Heart left ventricle (tissue), 16 donors: ENCODE measurements at regions of chr1 and their contacts with region 1.

Region 1: DNA sequence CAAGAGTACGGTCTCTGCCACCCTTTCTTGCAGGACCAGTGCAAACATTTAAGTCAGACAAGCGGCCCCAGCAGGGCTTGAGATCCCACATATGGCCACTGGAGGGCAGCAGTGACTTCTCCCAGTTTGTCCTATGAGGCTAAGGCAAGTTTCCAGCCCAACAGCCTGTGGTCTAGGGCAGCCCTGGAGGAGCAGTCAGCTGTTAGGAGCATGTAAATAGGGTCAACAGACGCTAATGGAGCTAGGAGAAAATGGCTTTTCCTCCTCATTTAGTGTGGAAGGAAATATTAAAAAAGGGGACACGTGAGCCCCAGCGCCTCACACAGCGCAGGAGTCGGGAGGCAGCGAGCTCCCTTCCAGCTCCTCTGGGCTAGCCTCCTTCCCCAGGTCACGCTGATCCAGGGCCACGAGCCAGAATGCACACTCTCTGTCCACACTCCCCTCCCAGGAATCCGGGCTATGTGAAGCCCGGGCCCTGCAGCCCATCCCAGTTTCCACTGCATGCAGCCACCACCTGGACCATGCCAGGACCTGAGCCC is 95.6 kb downstream of the LAMC2 start:
- DNase-seq: peak; percentile 90 to 95 (median 90)
- ATAC-seq: peak; percentile 87 to 94 (median 91)
- H3K4me3 ChIP-seq: peak overlapping the region in 3 of 12 donors; percentile 24 to 27 (median 25)
- H3K27ac ChIP-seq: peak overlapping the region; percentile 64 to 94 (median 82)
- H3K4me1 ChIP-seq: peaks cover 0 to 62% (median 44%) of the 10 kb centered on the region in 12 donors
- H3K27me3 ChIP-seq: no peaks in the 10 kb centered on the region
- CTCF ChIP-seq: peak; percentile 91 to 98 (median 96)
- POLR2A ChIP-seq: no peak

Region 2: GRCh38 chr1:183244466-183244865 is 37.2 kb before region 1 on chr1:
- intact Hi-C with region 1: loop called in 1 of 10 experiments (anchors 5 kb)
- DNase-seq: peak; percentile 49 to 89 (median 84)
- ATAC-seq: peak; percentile 22 to 64 (median 46)
- H3K4me3 ChIP-seq: no peak overlapping the region
- H3K27ac ChIP-seq: peak overlapping the region; percentile 26 to 88 (median 70)
- H3K4me1 ChIP-seq: peaks cover 0 to 60% (median 13%) of the 10 kb centered on the region in 12 donors
- H3K27me3 ChIP-seq: no peaks in the 10 kb centered on the region
- CTCF ChIP-seq: no peak
- POLR2A ChIP-seq: no peak

Region 3: GRCh38 chr1:183304440-183305107 is 23.0 kb after region 1 on chr1:
- intact Hi-C with region 1: loop called in 1 of 10 experiments (anchors 2 kb)
- DNase-seq: peak in 2 of 5 donors; percentile 38 to 51
- ATAC-seq: peak in 2 of 4 donors; percentile 19 to 70
- H3K4me3 ChIP-seq: peak overlapping the region in 3 of 12 donors; percentile 3 to 22 (median 12)
- H3K27ac ChIP-seq: peak overlapping the region in 10 of 12 donors; percentile 56 to 85 (median 67)
- H3K4me1 ChIP-seq: peaks cover 0 to 79% (median 44%) of the 10 kb centered on the region in 12 donors
- H3K27me3 ChIP-seq: no peaks in the 10 kb centered on the region
- CTCF ChIP-seq: no peak
- POLR2A ChIP-seq: no peak

Region 4: DNA sequence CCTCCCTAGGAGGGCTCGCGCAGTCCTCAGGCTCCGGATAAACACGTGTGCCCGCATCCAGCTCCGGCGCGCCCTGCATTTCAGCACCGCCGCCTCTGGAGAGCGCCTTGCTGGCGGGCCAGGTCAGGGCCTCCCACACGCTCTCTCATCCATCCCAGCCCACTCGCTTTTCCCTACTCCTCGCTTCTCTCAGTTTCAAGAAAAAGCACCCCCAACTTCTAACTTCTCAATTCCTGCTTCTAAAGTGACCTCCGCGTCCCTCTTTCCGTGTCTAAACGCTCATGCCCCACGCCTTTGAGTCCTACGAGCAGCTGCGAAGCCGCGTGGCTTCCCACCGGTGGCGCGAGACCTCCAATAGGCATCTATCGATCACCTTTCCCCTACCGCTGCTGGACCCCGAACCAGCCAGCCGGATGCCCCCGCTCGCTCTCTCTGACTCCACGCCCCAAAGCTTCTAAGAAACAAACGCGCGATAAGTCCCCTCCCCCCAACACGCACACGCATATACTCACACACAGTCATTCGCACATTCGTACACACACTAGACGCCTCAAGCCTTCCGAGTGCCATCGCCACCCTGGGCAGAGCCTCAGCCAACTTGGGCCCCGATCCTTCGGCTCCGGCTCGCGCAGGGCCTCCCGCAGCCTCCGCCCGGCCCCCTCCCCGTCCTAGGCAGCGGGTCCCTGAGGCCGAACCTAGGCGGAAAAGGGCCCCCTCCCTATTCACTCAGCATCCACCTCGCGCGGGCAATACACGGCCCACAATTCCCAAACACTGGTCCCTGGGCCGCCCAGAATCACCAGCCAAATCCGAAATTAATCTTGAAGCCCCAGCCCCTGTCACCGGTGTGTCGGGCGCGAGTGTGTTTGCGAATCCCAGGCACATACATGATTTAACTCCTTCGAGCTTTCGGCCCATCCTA is 135.5 kb after region 1 on chr1:
- intact Hi-C with region 1: loop called in 1 of 10 experiments (anchors 5 kb)
- DNase-seq: peak; percentile 57 to 81 (median 65)
- ATAC-seq: peak; percentile 80 to 98 (median 96)
- H3K4me3 ChIP-seq: peak overlapping the region; percentile 17 to 54 (median 43)
- H3K27ac ChIP-seq: no peak overlapping the region
- H3K4me1 ChIP-seq: peaks cover 0 to 23% (median 16%) of the 10 kb centered on the region in 12 donors
- H3K27me3 ChIP-seq: peaks cover 0 to 73% (median 20%) of the 10 kb centered on the region in 9 donors
- CTCF ChIP-seq: no peak
- POLR2A ChIP-seq: no peak

Region 5: DNA sequence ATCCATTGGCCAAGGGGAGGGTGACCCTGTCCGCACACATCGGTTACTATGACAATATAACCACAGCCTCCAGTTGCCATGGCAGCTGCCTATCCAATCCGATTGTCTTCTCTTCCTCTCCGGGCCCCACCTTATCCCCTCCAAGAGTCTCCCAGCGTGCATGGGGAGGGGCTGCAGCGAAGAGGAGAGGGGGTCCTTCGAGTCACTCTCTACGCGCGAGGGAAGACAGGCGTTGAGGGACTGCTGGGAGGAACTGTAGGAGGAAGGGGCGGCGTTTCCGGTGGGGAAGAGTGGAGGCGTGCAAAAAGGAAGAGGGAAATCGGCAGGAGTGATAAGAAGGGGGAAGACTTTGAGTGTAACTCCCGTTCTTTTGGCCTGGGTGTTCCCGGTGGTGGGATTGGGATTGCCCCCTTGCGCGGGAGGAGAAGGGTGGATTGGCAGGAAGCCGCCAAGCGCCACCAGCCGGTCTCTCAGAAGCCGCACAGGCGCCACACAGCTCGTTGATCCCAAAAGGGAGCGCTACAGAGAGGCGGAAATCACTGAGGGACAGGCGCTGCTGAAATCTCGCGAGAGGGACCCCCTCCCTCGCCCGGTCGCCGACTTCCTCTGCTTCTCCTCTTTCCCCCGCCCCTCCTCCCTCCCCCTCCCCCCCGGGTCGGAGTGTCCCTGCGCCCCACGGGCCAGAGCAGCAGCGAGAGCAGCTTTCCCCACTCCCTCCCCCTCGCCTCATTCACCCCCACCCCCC is 190.3 kb after region 1 on chr1:
- intact Hi-C with region 1: loop called in 8 of 10 experiments (anchors 2 to 10 kb)
- DNase-seq: peak; percentile 97 to 99 (median 99)
- ATAC-seq: peak; percentile 83 to 89 (median 86)
- H3K4me3 ChIP-seq: peak overlapping the region; percentile 69 to 98 (median 92)
- H3K27ac ChIP-seq: peak overlapping the region; percentile 91 to 99 (median 96)
- H3K4me1 ChIP-seq: peaks cover 3 to 44% (median 34%) of the 10 kb centered on the region in 12 donors
- H3K27me3 ChIP-seq: no peaks in the 10 kb centered on the region
- CTCF ChIP-seq: peak in 6 of 12 donors; percentile 6 to 44 (median 22)
- POLR2A ChIP-seq: peak in 1 of 2 donors; percentile 28

Region 6: DNA sequence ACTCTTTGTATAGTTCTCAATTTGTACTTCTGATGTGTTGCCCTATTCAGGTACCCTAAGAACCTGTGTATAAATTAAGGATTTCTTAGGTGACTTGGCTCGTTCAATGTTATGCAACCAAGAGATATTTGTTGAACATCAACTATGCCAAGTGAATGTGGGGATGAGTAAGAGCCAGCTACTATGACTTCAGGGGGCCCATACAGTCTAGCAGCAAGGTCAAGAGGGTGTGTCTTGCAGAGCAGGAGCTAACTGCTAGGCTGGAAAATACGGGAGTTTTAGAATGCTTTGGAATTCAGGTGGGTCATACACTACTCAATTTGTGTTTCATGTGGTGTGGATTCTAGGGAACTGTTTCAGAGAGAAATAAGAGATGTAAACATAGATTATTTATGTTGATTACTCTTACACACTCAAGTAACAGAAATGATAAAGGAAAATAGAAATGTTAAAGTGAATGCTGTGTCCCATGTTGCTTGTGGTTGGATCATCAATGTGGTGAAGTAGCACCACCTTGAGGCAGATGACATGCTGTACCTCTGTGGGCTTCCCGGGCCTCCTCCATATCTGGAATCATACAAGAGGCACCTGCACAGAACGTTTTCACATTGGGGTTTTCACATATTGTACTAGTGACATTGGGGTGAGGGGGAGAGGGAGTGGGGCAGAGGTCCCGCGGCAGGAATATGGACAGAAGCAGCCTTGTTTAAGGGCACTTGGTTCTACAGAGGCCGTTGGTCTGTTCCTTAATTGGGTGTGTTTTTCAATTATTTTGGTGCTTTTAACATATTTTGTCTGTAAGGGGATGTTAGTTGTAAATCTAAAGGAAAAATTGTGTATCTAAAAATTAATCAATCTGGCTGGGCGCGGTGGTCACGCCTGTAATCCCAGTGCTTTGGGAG is 341.5 kb after region 1 on chr1:
- intact Hi-C with region 1: loop called in 6 of 10 experiments (anchors 5 to 10 kb)
- DNase-seq: peak in 3 of 5 donors; percentile 38 to 53 (median 52)
- ATAC-seq: peak; percentile 83 to 94 (median 92)
- H3K4me3 ChIP-seq: no peak overlapping the region
- H3K27ac ChIP-seq: peak overlapping the region in 1 of 12 donors; percentile 27
- H3K4me1 ChIP-seq: peaks cover 0 to 51% (median 28%) of the 10 kb centered on the region in 12 donors
- H3K27me3 ChIP-seq: no peaks in the 10 kb centered on the region
- CTCF ChIP-seq: peak; percentile 45 to 79 (median 64)
- POLR2A ChIP-seq: no peak